Esophagus squamous epithelium (tissue), 5 donors: ENCODE measurements at regions of chr2 and their contacts with region 1.

Region 1: GRCh38 chr2:225122583-225123486 is 80.6 kb upstream of the DOCK10 start:
- DNase-seq: no peak
- H3K4me3 ChIP-seq: no peak overlapping the region
- H3K27ac ChIP-seq: no peak overlapping the region
- H3K4me1 ChIP-seq: no peaks in the 10 kb centered on the region
- H3K27me3 ChIP-seq: no peaks in the 10 kb centered on the region
- CTCF ChIP-seq: peak in 2 of 6 experiments; percentile 33 to 40
- POLR2A ChIP-seq: no peak

Region 2: DNA sequence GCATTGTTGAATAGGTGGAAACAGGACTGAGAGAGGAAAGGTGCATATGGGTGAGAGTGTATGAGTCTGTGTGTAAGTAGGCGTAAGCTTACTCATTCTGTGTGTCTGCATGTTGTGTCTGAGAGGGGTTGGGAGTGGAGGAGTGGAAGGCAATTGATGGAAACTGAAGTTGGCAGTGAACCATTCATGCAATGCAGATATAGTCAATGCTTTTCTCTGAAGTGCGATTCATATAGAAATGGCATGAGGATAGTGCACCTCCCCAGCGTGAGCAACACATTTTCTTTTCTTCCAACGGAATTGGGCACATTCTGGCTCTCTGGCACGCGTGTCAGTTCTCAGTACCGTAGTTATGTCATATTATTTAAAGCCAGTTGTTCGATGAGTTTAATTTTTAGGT is 527.2 kb after region 1 on chr2:
- intact Hi-C with region 1: loop called (anchors 10 kb)
- DNase-seq: no peak
- H3K4me3 ChIP-seq: no peak overlapping the region
- H3K27ac ChIP-seq: no peak overlapping the region
- H3K4me1 ChIP-seq: no peaks in the 10 kb centered on the region
- H3K27me3 ChIP-seq: peaks cover 0 to 7% (median 0%) of the 10 kb centered on the region in 4 donors
- CTCF ChIP-seq: no peak
- POLR2A ChIP-seq: no peak

Region 3: GRCh38 chr2:226011716-226012450 is 889.0 kb after region 1 on chr2:
- intact Hi-C with region 1: no loop called
- DNase-seq: no peak
- H3K4me3 ChIP-seq: no peak overlapping the region
- H3K27ac ChIP-seq: no peak overlapping the region
- H3K4me1 ChIP-seq: no peaks in the 10 kb centered on the region
- H3K27me3 ChIP-seq: no peaks in the 10 kb centered on the region
- CTCF ChIP-seq: no peak
- POLR2A ChIP-seq: no peak